HEK293T (cell line): ENCODE measurements at regions of chr12 and their contacts with region 1.

Region 1: DNA sequence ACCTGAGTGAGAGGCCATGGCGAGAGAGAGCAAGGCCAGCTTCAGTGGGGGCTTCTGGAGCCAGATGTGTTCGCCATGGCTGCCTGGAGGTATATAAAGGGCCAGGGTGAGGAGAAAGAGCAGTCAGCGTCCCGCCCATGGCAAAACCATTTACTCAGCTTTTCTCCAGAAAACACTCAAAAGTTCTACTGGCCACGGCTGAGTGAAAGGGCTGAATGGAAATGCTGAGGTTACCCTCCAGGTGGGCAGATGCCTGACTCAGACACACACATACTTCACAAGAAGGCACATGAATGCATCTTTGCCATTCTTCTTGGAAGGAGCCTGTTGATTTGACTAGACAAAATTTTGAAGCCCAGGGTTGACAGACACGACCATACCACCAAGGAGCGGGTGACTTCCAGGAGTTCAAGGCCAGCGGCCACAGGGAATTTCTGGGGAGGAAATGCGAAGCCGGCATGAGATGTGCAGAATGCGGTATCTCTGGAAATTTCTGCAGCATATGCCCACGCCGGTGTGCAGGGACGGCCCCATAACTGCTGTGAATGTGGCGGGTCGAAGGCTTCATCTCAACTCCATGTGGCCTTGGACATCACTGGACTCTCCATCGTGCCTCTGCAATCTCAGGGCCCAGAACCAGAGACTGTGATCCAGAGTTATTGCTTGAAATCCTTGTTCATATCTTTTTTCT is at the start of gene IL31:
- DNase-seq: no peak

Region 2: DNA sequence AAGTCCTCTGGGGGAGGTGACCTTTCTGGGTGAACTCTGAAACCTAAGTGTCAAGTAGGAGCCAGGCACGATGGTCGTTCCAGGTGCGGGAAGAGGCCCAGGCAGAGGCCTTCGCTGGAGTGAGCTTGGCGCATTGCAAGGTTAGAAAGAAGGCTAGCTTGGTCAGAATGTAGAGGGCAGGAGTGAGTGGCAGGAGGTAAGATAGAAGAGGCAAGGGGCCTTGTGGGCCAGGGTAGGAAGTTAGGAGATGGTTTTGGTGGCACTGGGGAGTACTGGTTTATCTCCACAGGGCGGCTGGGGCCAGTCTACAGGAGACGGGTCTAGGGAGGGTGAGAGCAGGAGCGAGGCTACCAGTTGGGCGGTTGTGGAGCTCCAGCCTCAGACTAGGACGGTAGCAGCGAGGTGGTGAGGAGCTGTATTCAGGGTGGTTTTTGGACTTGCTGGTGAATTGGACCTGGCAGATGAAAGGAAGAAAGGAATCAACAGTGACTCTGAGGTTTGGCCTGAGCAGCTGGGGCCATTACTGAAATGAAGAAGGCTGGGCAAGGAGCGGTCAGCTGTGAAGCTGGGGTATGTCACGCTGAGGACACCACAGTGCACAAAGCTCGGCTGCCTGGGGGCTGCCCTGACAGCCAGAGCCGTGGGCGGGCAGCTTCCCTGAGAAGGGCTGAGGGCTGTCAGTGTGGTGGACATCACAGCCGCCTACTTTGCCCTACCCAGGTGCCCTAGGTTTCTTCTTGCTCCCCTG is 86.7 kb before region 1 on chr12:
- CTCF ChIA-PET with region 1: interaction called, 13 read pairs
- POLR2A ChIA-PET with region 1: no interaction called
- DNase-seq: no peak